ENCODE measurements at regions of chr10 and their contacts with region 1.

Region 1: GRCh38 chr10:59240582-59241183 is 64.2 kb downstream of the PHYHIPL start:
- DNase-seq: peak; percentile 66
- H3K4me3 ChIP-seq: no peak overlapping the region
- H3K27ac ChIP-seq: no peak overlapping the region
- H3K4me1 ChIP-seq: peaks cover 29% of the 10 kb centered on the region
- H3K27me3 ChIP-seq: no peaks in the 10 kb centered on the region
- CTCF ChIP-seq: peak; percentile 72

Region 2: DNA sequence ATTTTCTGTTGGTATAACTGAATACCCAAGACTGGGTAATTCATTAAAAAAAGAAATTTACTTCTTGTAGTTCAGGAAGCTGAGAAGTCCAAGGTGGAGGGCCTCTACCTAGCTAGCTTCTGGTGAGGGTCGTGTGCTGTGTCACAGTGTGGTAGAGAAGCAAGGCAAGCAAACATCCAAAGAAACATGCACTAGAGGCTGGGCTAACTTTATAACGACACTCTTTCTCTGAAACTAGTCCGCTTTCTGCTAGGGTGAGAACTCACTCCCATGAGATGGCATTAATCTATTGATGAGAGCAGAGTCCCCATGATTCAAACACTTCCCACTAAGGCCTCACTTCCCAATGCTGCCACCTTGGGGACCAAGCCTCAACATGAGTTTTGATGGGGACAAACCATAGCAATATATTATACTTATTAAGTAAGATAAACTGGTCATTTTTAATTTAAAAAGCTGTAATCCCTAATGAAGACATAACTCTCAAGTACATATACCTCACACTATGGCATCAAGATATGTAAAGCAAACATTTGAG is 13.5 kb before region 1 on chr10:
- CTCF ChIA-PET with region 1: no interaction called
- POLR2A ChIA-PET with region 1: no interaction called
- intact Hi-C with region 1: no loop called
- DNase-seq: peak; percentile 12
- H3K4me3 ChIP-seq: no peak overlapping the region
- H3K27ac ChIP-seq: no peak overlapping the region
- H3K4me1 ChIP-seq: no peaks in the 10 kb centered on the region
- H3K27me3 ChIP-seq: no peaks in the 10 kb centered on the region
- CTCF ChIP-seq: peak; percentile 29; the same call in 1 of the 2 replicates

Region 3: GRCh38 chr10:59362144-59362958 is 121.7 kb after region 1 on chr10 and contains the start of gene FAM13C:
- CTCF ChIA-PET with region 1: no interaction called
- POLR2A ChIA-PET with region 1: no interaction called
- intact Hi-C with region 1: loop called (anchors 5 kb)
- DNase-seq: peak; percentile 88
- H3K4me3 ChIP-seq: peak within 1 kb of the TSS; percentile 53
- H3K27ac ChIP-seq: peak within 1 kb of the TSS; percentile 64
- H3K4me1 ChIP-seq: peaks cover 25% of the 10 kb centered on the region
- H3K27me3 ChIP-seq: no peaks in the 10 kb centered on the region
- CTCF ChIP-seq: no peak
- total RNA-seq, gene FAM13C: 18.5 and 21.2 TPM in 2 replicates

Region 4: DNA sequence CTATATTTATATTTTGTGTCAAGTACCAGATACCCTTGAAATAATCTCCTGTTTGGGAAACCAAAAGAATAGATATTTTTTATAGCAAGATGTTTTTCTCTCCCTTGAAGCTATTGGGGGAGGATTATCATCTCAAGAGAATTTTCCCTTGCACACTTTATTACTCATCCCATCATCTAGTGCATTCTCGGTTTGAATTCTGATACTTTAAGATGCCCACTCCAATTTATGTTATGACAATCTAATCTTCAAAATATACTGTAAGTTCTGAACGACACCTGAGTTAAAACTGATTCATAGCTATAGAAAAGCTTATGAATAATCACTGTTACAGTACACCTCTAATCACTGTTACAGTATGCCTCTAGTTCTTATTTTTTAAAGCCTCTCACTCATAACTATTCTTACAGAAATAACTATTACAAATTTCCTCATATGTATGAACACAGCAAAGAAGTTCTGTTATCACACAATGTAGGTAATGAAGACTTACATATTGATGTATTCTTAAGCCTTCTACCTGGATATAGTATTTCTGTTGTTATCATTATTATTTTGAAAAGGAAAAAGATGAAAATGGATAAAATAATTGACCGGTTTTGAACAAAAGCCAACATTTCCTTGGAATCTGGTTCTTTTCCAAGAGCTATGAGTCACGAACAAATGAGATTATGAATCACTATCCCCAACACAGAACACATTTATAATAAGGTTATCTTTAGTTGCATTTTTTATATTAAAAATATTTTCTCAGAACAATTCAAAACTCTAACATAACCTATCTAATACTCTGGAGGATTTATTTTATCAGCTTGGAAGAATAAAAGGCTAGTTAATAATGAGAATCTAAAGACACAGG is 194.0 kb after region 1 on chr10:
- CTCF ChIA-PET with region 1: no interaction called
- POLR2A ChIA-PET with region 1: no interaction called
- intact Hi-C with region 1: loop called (anchors 2 kb)
- DNase-seq: peak; percentile 49
- H3K4me3 ChIP-seq: no peak overlapping the region
- H3K27ac ChIP-seq: peak overlapping the region; percentile 73
- H3K4me1 ChIP-seq: peaks cover 56% of the 10 kb centered on the region
- H3K27me3 ChIP-seq: no peaks in the 10 kb centered on the region
- CTCF ChIP-seq: no peak

Region 5: DNA sequence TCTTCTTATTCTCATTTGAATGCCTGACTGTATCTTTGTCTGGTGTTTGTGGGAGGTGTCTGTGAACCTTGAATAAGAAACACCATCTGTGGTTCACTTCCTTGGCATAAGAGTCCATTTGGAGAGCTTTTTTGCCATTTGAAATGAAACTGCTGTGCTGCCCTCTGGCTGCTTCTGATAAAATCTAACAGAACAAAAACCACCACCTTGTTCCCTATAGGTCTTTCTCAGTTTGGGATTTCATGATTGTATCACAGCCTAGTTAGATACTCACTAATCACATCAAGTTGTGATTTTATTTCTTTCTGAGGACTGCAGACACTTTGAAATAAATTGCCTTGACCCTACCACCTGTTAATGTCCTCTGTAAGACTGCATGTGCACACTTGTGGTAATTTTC is 224.4 kb after region 1 on chr10:
- CTCF ChIA-PET with region 1: no interaction called
- POLR2A ChIA-PET with region 1: no interaction called
- intact Hi-C with region 1: loop called (anchors 5 kb)
- DNase-seq: peak; percentile 62
- H3K4me3 ChIP-seq: no peak overlapping the region
- H3K27ac ChIP-seq: no peak overlapping the region
- H3K4me1 ChIP-seq: peaks cover 25% of the 10 kb centered on the region
- H3K27me3 ChIP-seq: no peaks in the 10 kb centered on the region
- CTCF ChIP-seq: peak; percentile 51

Region 6: GRCh38 chr10:59580026-59580863 is 339.6 kb after region 1 on chr10:
- CTCF ChIA-PET with region 1: interaction called, 3 read pairs
- POLR2A ChIA-PET with region 1: no interaction called
- intact Hi-C with region 1: loop called (anchors 1 kb)
- DNase-seq: peak; percentile 81
- H3K4me3 ChIP-seq: no peak overlapping the region
- H3K27ac ChIP-seq: no peak overlapping the region
- H3K4me1 ChIP-seq: peaks cover 15% of the 10 kb centered on the region
- H3K27me3 ChIP-seq: no peaks in the 10 kb centered on the region
- CTCF ChIP-seq: peak; percentile 72

Region 7: GRCh38 chr10:59757966-59758365 is 517.3 kb after region 1 on chr10:
- CTCF ChIA-PET with region 1: no interaction called
- POLR2A ChIA-PET with region 1: no interaction called
- intact Hi-C with region 1: no loop called
- DNase-seq: no peak
- H3K4me3 ChIP-seq: no peak overlapping the region
- H3K27ac ChIP-seq: no peak overlapping the region
- H3K4me1 ChIP-seq: no peaks in the 10 kb centered on the region
- H3K27me3 ChIP-seq: no peaks in the 10 kb centered on the region
- CTCF ChIP-seq: no peak

Region 8: DNA sequence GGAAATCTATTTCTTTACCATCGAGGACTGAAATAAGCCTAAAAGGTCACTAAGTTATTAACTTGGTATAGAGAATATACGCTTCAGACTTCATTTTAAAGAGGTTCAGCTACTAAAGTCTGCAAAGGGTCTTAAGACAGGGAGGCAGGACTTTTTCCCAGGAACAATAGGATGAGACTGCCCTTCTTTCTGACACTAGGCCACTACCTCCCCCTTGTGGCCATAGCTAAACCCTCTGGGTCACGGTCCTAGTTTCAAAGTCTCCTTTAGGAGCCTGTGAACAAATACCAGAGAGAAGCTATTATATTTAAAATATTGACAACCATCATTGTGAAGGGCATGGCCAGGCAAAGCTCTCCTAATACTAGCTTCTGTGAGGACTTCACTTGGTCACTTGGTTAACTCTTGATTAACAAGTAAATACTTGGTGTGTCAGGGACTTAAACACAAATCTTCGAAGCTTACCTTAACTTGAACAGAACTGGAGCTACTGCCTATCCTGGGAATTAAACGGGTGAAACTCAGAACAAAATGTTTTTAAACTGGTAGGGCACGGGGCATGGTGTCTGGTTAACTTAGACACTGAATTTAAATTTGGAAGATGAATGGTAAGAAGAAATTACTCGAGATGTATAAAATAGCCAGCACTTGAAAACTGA is 590.0 kb after region 1 on chr10:
- CTCF ChIA-PET with region 1: no interaction called
- POLR2A ChIA-PET with region 1: no interaction called
- intact Hi-C with region 1: loop called (anchors 5 kb)
- DNase-seq: peak; percentile 71
- H3K4me3 ChIP-seq: no peak overlapping the region
- H3K27ac ChIP-seq: no peak overlapping the region
- H3K4me1 ChIP-seq: no peaks in the 10 kb centered on the region
- H3K27me3 ChIP-seq: no peaks in the 10 kb centered on the region
- CTCF ChIP-seq: peak; percentile 80

Region 9: GRCh38 chr10:60032723-60033122 is 792.0 kb after region 1 on chr10:
- CTCF ChIA-PET with region 1: no interaction called
- POLR2A ChIA-PET with region 1: no interaction called
- intact Hi-C with region 1: loop called (anchors 2 kb)
- DNase-seq: peak; percentile 73
- H3K4me3 ChIP-seq: no peak overlapping the region
- H3K27ac ChIP-seq: no peak overlapping the region
- H3K4me1 ChIP-seq: peaks cover 20% of the 10 kb centered on the region
- H3K27me3 ChIP-seq: peaks cover 49% of the 10 kb centered on the region
- CTCF ChIP-seq: peak; percentile 80